Left cardiac atrium (tissue), 4 donors: ENCODE measurements at regions of chrX and their contacts with region 1.

Region 1: GRCh38 chrX:10119399-10119990 is 37.3 kb upstream of the CLCN4 start:
- DNase-seq: peak; percentile 72
- ATAC-seq: peak; percentile 68 to 71

Region 2: DNA sequence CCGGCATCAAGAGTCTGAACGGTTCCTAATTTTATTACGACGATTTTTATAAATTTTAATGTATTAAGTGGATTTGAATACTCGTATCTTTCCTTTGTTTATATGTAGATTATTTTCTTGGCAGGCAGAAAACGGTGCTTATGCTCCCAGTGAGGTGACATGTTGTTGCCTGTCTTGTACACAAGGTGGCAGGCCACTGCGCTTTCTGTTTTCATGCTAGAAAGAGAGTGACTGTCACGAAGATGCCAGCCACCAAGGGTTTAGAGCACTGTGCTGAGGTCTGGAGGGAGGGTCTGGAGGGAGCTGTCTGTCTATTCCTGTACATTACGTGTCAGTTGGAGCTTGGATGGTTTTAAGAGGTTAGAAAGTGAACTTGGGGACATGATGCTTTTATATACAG is 245.5 kb before region 1 on chrX:
- intact Hi-C with region 1: loop called in 1 of 2 experiments (anchors 10 kb)
- DNase-seq: peak; percentile 41
- ATAC-seq: no peak

Region 3: DNA sequence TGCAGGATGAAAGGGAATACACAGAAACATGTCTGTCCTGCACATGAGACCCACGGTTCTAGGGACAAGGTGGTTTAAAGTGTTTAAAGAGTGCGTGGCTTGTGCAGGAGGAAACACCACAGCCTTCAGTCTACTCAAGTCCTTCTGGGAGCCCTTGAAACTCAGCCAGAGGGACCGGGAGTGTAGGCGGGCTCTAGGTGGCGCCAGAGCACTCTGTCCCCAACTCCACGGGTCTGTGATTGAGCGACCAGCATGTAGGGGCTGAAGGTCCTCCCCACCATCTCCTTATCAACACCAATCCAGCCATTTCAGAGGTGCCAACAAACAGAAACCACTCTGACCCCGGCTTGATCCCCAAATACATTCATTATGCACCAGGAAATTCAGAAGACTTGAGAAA is 234.3 kb before region 1 on chrX:
- intact Hi-C with region 1: loop called in 1 of 2 experiments (anchors 5 kb)
- DNase-seq: peak; percentile 58
- ATAC-seq: peak; percentile 61 to 68

Region 4: DNA sequence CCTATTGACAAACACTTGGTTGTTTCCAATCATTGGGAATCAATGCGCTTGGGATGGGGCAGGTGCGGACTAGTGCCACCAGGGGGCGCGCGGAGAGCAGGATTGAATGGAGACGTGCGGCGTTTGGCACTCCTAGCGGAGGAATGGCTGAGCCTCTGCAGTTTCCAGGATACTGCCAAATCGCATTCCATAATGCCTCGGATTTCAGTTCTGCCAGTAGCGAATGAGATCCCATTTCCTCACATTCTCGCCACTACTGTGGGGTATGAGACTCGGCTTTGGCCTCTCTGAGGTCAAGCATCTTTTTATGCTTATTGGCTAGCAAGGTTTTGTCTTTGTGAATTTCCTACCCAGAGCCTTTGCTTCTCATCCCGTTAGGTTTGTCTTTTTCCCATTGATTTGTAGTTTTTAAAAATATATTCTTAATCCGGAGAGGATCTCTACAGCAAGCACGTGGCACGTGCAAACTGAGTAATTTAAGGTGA is 123.6 kb before region 1 on chrX:
- intact Hi-C with region 1: loop called (anchors 1 to 5 kb)
- DNase-seq: peak; percentile 86
- ATAC-seq: peak; percentile 92 to 94

Region 5: GRCh38 chrX:10189317-10190268 is 70.1 kb after region 1 on chrX:
- intact Hi-C with region 1: no loop called
- DNase-seq: peak; percentile 70
- ATAC-seq: peak; percentile 88 to 93